Lower leg skin (tissue), 4 donors: ENCODE measurements at regions of chr6 and their contacts with region 1.

Region 1: DNA sequence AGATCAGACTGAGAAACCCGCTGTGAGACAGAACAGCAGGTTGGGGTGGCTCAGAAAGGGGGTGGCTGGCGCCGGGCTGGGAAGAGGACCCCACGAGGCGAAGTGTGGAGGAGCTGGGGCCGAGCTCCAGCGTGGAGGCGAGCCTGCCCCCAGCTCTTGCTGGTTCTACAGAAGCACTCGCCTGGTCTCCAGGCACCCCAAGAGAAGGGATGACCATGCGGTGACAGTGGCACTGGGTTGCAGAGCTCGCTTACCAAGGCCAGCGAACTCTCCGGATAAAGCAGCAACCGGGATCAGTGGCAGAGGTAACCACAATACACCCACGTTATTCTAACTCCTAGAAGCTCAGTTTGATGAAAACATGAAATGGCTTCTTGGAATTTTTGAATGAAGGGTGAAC is 26.5 kb downstream of the THBS2 start:
- DNase-seq: no peak
- H3K4me3 ChIP-seq: no peak overlapping the region
- CTCF ChIP-seq: no peak
- POLR2A ChIP-seq: no peak

Region 2: GRCh38 chr6:169244684-169245383 is 17.7 kb after region 1 on chr6:
- intact Hi-C with region 1: loop called (anchors 1 kb)
- DNase-seq: no peak
- H3K4me3 ChIP-seq: no peak overlapping the region
- CTCF ChIP-seq: no peak
- POLR2A ChIP-seq: no peak

Region 3: GRCh38 chr6:170024952-170025911 is 798.1 kb after region 1 on chr6:
- intact Hi-C with region 1: no loop called
- DNase-seq: peak; percentile 59 to 85
- H3K4me3 ChIP-seq: no peak overlapping the region
- CTCF ChIP-seq: no peak
- POLR2A ChIP-seq: no peak